Calu3 (cell line): ENCODE measurements at regions of chrX and their contacts with region 1.

Region 1: DNA sequence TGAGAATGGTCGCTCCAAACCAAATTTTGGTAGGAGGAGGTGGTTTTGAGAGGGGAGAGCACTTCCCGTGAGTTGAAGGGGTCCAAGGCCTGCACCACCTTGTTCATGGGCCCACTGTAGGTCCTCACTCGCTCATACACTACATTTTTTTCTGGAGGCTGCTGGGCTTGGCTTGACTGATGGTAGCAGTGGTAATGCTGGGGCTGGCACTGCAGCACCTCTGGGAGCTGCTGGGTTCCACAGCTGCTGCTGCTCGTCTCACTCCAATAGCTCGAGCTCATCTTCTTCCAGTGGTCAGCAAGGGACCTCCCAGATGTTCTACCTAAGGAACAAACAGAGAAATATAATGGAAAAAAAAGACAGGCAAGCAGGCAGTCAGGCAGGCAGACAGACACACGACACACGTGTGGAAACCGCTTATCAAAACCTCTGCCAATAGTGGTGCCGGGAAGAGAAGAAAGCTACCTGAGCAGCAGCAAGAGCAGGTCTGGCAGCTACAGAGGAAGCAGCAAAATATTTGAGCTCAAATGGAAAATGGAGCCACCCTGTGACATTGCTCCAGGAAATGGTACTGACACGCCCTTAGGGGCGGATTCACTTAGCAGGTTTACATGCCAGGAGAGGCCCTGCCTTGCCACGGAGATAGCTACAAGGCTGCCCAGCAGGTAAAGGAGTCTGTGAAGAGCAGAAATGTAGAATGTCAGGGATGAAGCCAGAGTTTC is at the start of gene POF1B:
- DNase-seq: peak; percentile 74
- H3K4me3 Mint-ChIP-seq: peak within 1 kb of the TSS; percentile 78
- H3K27ac Mint-ChIP-seq: peak within 1 kb of the TSS; percentile 79
- H3K4me1 Mint-ChIP-seq: peaks cover 7% of the 10 kb centered on the region
- H3K27me3 Mint-ChIP-seq: no peaks in the 10 kb centered on the region
- CTCF ChIP-seq: no peak
- total RNA-seq, gene POF1B: 24.1 and 32.5 TPM in 2 replicates

Region 2: GRCh38 chrX:85111347-85111746 is 268.0 kb before region 1 on chrX:
- CTCF ChIA-PET with region 1: interaction called, 5 read pairs
- intact Hi-C with region 1: loop called (anchors 10 kb)
- DNase-seq: no peak
- H3K4me3 Mint-ChIP-seq: no peak overlapping the region
- H3K27ac Mint-ChIP-seq: no peak overlapping the region
- H3K4me1 Mint-ChIP-seq: no peaks in the 10 kb centered on the region
- H3K27me3 Mint-ChIP-seq: no peaks in the 10 kb centered on the region
- CTCF ChIP-seq: no peak

Region 3: GRCh38 chrX:85274333-85274732 is 105.0 kb before region 1 on chrX:
- CTCF ChIA-PET with region 1: no interaction called
- intact Hi-C with region 1: loop called (anchors 10 kb)
- DNase-seq: no peak
- H3K4me3 Mint-ChIP-seq: no peak overlapping the region
- H3K27ac Mint-ChIP-seq: no peak overlapping the region
- H3K4me1 Mint-ChIP-seq: no peaks in the 10 kb centered on the region
- H3K27me3 Mint-ChIP-seq: no peaks in the 10 kb centered on the region
- CTCF ChIP-seq: no peak